Natural killer cell (primary cell): ENCODE measurements at regions of chr20 and their contacts with region 1.

Region 1: DNA sequence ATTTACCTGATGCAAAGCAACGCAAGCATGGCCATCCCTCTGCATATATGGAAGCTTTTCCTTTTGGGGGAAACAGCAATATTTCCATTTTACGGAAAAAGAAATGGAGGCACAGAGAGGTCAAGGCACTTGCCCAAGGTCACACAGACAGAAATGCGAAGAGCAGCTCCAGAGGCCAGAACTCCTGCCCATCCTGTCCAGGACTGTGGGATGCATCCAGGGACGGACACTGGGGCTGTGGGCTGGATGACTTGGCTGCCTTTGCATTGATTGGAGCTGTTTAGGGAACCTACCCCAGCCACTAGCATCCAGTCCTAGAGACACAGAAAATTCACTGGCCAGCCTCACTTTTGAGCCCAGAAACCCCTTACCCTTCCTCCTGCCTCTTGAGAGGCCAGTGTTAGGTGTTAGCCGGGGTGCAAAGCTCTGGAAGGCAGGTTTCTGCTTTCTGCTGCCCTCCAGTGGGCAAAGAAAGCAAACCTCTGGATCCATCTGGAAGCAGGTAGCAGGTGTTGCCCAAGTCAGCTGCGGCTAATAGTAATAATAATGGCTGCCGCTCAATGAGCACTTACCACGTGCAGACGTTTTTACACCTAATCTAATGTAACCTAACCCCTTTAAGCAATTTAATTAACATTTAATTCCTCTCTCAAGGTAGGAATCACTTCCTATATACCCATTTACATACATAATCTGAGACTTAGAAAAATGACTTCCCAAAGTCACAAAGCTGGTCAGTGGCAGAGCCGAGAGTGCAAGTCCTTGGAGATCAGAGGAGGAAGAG is 31.7 kb upstream of the CCN5 start:
- DNase-seq: peak; percentile 45 to 77
- ATAC-seq: peak; percentile 74 to 89 (median 78)
- H3K4me3 ChIP-seq: no peak overlapping the region
- H3K4me3 Mint-ChIP-seq: no peak overlapping the region
- H3K27ac ChIP-seq: no peak overlapping the region
- H3K27ac Mint-ChIP-seq: no peak overlapping the region
- H3K4me1 ChIP-seq: peaks cover 6% of the 10 kb centered on the region
- H3K4me1 Mint-ChIP-seq: peaks cover 6 to 10% of the 10 kb centered on the region in 2 donors
- H3K27me3 ChIP-seq: no peaks in the 10 kb centered on the region
- H3K27me3 Mint-ChIP-seq: peaks cover 2 to 12% of the 10 kb centered on the region in 2 donors
- CTCF ChIP-seq: peak; percentile 59

Region 2: GRCh38 chr20:44217342-44218092 is 465.9 kb before region 1 on chr20:
- intact Hi-C with region 1: loop called (anchors 1 kb)
- DNase-seq: peak; percentile 53 to 90
- ATAC-seq: peak; percentile 65 to 73 (median 70)
- H3K4me3 ChIP-seq: peak overlapping the region; percentile 2
- H3K4me3 Mint-ChIP-seq: peak overlapping the region; percentile 92
- H3K27ac ChIP-seq: peak overlapping the region; percentile 52
- H3K27ac Mint-ChIP-seq: peak overlapping the region; percentile 37 to 68
- H3K4me1 ChIP-seq: peaks cover 31% of the 10 kb centered on the region
- H3K4me1 Mint-ChIP-seq: peaks cover 49 to 54% of the 10 kb centered on the region in 2 donors
- H3K27me3 ChIP-seq: no peaks in the 10 kb centered on the region
- H3K27me3 Mint-ChIP-seq: no peaks in the 10 kb centered on the region
- CTCF ChIP-seq: peak; percentile 98

Region 3: GRCh38 chr20:44388466-44389023 is 294.9 kb before region 1 on chr20:
- intact Hi-C with region 1: loop called (anchors 1 kb)
- DNase-seq: peak; percentile 61 to 79
- ATAC-seq: peak; percentile 73 to 90 (median 86)
- H3K4me3 ChIP-seq: no peak overlapping the region
- H3K4me3 Mint-ChIP-seq: no peak overlapping the region
- H3K27ac ChIP-seq: no peak overlapping the region
- H3K27ac Mint-ChIP-seq: no peak overlapping the region
- H3K4me1 ChIP-seq: peaks cover 6% of the 10 kb centered on the region
- H3K4me1 Mint-ChIP-seq: peaks cover 11 to 24% of the 10 kb centered on the region in 2 donors
- H3K27me3 ChIP-seq: peaks cover 3% of the 10 kb centered on the region
- H3K27me3 Mint-ChIP-seq: peaks cover 7 to 10% of the 10 kb centered on the region in 2 donors
- CTCF ChIP-seq: peak; percentile 72

Region 4: DNA sequence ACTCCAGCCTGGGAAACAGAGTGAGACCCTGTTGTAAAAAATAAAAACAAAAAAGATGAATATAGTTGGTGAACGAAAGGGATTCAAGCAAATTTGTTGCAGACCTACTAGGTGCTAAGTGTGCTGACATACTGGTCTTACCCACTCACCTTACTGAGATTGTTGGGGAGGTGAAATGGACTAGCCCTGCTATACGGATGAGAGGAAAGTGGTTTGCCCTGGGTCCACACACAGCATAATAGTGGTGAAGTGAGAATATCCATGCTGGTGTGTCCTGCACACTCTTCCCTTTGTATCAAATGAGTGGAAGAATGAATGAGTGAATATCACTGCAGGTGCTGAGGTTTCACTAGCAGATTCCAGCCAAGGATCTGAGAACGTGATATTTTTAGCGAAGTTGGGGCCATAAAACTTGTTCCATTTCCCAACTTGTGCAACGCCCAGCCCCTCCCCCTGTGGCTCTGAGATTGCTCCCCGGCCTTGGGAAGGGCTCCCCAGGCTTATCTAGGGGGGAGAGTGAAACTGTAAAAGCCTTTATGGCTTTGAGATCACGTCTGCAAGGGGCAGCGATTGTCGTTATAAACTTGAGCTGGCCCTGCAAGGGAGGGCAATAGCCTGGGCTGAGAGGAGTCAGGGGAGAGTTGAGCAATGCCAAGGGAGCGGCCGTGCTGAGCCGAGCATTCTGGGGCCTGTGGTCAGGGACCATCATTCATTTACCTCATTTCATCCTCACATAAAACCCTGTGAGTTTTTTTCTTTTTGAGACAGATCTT is 241.0 kb before region 1 on chr20:
- intact Hi-C with region 1: no loop called
- DNase-seq: no peak
- ATAC-seq: no peak
- H3K4me3 ChIP-seq: no peak overlapping the region
- H3K4me3 Mint-ChIP-seq: no peak overlapping the region
- H3K27ac ChIP-seq: no peak overlapping the region
- H3K27ac Mint-ChIP-seq: no peak overlapping the region
- H3K4me1 ChIP-seq: no peaks in the 10 kb centered on the region
- H3K4me1 Mint-ChIP-seq: no peaks in the 10 kb centered on the region
- H3K27me3 ChIP-seq: no peaks in the 10 kb centered on the region
- H3K27me3 Mint-ChIP-seq: peaks cover 8 to 12% of the 10 kb centered on the region in 2 donors
- CTCF ChIP-seq: no peak

Region 5: DNA sequence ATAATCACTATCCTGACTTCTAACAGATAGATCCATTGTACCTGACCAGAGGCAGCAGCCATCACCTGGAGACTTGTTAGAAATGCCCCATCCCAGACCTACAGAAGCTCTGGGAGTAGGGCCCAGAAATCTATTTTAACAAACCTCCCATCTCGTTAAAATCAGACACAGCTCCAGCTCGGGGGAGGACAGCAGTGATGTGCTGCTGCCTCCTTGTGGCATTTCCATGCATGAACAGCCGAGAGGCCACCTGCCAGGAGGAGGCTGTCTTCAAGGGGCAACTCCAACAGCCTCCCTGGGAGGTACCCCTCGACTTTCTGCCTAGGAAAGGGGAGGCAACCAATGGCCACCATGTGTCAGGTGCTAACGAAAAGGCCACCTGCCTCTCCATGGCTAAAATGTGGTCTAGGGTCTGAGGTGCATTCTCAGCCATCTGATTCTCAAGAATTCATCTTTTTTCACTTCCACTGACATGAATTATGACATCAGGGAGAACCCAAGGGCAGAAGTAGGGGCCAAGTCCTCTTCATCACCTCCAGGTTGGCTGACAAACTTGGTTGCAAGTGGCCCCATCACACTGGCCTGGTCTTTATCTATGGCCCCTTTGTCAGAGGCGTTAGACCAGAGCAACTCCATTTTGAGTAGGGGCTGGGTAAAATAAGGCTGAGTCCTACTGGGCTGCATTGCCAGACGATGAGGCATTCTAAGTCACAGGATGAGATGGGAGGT is 50.0 kb after region 1 on chr20:
- intact Hi-C with region 1: loop called (anchors 1 kb)
- DNase-seq: peak; percentile 45 to 81
- ATAC-seq: peak; percentile 55 to 84 (median 80)
- H3K4me3 ChIP-seq: no peak overlapping the region
- H3K4me3 Mint-ChIP-seq: no peak overlapping the region
- H3K27ac ChIP-seq: no peak overlapping the region
- H3K27ac Mint-ChIP-seq: no peak overlapping the region
- H3K4me1 ChIP-seq: peaks cover 4% of the 10 kb centered on the region
- H3K4me1 Mint-ChIP-seq: peaks cover 12 to 20% of the 10 kb centered on the region in 2 donors
- H3K27me3 ChIP-seq: no peaks in the 10 kb centered on the region
- H3K27me3 Mint-ChIP-seq: peaks cover 4 to 7% of the 10 kb centered on the region in 2 donors
- CTCF ChIP-seq: peak; percentile 68

Region 6: GRCh38 chr20:44866703-44867335 is 183.4 kb after region 1 on chr20:
- intact Hi-C with region 1: loop called (anchors 1 kb)
- DNase-seq: no peak
- ATAC-seq: no peak
- H3K4me3 ChIP-seq: no peak overlapping the region
- H3K4me3 Mint-ChIP-seq: peak overlapping the region; percentile 56
- H3K27ac ChIP-seq: no peak overlapping the region
- H3K27ac Mint-ChIP-seq: no peak overlapping the region
- H3K4me1 ChIP-seq: peaks cover 5% of the 10 kb centered on the region
- H3K4me1 Mint-ChIP-seq: peaks cover 7 to 10% of the 10 kb centered on the region in 2 donors
- H3K27me3 ChIP-seq: peaks cover 7% of the 10 kb centered on the region
- H3K27me3 Mint-ChIP-seq: peaks cover 8 to 13% of the 10 kb centered on the region in 2 donors
- CTCF ChIP-seq: no peak

Region 7: DNA sequence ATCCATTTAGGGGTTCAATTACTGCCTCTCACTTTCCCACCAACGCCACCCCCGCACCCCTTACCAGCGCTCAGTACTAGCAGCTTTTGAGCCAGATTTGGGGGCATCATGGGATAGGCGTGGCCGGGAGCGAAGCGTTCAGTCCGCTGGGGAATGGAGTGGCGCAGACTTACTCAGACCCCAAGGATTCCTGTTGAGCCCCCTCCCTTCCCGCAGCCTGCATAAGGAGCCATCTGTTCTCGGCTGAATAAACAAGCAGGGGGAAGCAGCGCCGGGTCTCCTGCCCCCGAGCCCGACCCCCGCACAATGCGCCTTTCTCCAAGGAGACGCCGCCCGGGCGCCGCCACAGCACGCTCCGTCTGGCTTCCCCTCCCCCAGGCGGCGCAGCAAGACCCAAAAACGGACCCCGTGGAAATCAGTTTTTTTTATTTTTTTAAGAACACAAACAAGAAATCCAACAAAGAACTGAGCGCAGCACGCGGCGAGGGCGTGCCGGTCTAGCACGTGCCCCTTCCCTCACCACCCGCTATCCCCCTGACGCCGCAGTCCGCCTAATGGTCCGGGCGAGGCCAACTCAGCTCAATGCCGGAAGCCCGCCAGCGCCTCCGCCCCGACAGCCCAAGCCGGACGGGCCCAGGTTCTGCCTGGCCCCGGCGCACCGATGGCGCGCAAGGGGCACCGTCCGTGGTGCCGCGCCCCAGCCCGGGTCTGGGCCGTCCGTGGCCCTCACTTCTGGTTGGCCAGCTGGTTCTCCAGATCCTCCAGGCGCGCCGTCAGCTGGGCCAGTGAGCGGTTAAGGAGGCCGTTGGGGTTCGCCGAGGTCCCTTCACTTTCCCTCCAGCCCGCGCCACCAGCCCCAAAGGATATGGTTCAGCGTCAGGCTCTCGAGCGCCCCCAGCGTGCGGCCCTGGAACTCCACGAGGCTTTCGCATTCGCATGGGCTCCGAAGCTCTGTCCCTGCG is 609.9 kb after region 1 on chr20:
- intact Hi-C with region 1: loop called (anchors 10 kb)
- DNase-seq: peak; percentile 75 to 83
- ATAC-seq: peak; percentile 91 to 93 (median 93)
- H3K4me3 ChIP-seq: peak overlapping the region; percentile 23
- H3K4me3 Mint-ChIP-seq: peak overlapping the region; percentile 80
- H3K27ac ChIP-seq: no peak overlapping the region
- H3K27ac Mint-ChIP-seq: no peak overlapping the region
- H3K4me1 ChIP-seq: peaks cover 11% of the 10 kb centered on the region
- H3K4me1 Mint-ChIP-seq: peaks cover 15 to 25% of the 10 kb centered on the region in 2 donors
- H3K27me3 ChIP-seq: peaks cover 10% of the 10 kb centered on the region
- H3K27me3 Mint-ChIP-seq: peaks cover 25 to 41% of the 10 kb centered on the region in 2 donors
- CTCF ChIP-seq: peak; percentile 83